Posterior vena cava (tissue), 2 donors: ENCODE measurements at regions of chr3 and their contacts with region 1.

Region 1: DNA sequence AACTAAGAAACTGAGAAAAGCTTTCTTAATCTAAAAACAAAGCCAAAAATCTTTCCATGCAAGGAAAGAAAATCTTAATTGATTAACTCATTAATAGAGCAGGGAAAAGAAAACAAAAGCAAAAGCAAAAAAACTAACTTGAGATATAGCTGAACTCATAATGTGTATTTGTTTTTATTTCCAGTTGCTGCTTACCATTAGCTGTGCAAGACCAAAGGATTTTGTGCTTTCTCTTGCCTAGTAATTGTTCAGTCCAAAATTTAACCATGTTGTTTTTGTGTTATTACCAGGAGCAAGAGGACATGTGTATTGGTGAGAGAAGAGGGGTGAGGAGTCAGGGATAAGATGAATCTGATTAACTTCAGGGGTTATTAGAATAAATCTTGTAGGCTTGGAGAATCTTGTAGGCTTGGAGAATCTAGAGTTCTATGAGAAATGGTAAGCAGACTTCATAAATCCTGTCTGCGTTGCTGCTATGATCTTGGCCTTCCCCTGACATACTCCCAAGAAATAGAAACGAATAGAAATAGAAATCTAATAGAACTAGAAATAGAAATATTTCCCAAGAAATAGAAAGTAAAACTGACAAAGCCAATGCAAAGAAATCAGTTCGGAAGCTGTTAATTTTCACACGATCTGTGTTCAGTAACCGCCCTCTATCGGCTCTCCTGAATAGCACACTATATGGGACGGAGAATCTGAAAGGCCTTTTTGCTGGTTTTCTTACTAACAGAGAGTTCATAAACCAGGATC is 72.6 kb upstream of the TNFSF10 start:
- DNase-seq: no peak

Region 2: DNA sequence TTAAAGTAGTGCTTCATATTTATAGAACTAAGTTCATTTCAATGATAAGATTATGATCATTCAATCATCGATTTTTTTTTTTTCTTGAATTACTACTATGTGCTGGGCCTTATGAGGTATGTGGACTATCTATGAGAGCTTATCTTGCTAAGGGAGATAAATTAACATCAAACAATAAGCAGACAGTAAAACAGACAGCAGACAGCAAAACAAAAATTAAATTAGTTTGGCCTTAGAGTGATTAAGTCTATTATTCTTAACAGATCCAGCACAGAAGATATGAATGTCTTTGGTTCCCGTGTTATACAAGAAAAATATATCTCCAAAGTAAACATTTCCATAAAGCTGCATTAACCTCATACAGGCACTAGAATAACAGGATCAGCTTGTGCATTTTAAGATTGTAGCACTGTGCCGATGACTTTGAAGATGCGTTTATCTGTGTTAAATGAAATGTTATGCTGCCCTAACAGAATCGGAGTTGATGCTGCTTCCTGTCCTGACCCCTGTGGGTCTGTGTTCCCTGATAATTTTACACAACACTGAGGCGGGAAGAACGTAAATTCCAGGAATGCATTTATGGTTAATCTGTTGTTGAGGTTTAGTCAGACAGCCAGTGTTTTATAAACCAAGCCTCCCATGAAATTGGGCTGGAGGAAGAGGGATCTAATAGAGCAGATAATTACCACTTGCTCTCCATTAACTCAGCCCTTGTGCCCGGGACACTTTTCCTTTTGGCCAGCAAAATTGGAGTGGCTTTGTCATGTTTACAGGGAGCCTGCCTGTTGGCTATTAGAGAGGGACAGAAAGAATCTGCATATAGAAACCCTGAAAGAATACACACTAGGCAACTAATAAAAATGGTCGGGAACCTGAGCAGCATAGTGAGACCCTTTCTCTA is 228.4 kb before region 1 on chr3:
- intact Hi-C with region 1: no loop called
- DNase-seq: no peak

Region 3: DNA sequence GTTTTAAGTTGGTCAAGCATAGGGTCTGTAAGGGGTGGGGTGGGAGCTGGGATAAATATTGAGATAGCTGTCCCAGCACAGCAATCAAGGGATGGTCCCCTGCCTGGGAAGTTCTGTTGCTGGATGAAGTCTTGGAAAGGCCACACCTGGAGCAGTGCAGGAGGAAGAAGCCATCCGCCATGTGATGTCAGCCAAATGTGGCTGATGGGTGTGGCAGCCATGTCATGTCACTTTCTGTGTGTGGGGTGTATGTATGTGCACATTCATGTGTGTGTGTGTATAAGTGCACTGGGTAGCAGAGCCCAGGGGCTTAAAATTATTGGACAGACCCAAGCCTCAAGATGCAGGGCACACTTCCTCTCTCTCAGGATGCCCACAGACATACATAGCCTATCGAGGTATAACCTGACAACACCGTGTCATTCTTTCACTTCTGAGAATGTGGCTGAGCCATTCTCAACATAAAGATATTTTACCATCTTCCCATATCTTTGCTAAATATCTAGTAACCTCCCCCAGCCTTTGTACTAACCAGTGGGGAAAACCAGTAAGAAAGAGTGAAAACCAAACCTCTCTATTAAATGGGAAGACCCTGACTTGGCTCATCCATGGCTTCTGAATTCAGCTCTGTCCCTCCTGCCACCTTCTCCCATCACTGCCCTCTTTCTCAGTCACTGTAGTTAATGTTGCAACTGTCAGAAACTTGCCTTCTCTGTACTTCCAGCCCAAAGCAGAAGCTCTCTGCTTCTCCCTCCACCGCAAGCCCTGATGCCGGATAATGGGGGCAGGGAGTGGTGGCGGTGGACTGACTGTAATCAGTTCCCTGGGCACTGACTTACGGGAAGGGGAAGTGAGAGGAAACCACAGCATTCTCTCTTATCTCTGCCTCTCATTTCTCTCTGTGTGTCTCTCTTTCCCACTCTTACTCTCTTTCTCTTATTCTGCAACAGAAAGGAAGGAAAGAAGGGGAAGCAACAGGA is 83.7 kb before region 1 on chr3:
- intact Hi-C with region 1: loop called in 1 of 2 experiments (anchors 10 kb)
- DNase-seq: peak; percentile 90